ENCODE measurements at regions of chr7 and their contacts with region 1.

Region 1: GRCh38 chr7:151315038-151315655 is 26.5 kb upstream of the NUB1 start:
- DNase-seq: peak; percentile 90
- H3K4me3 ChIP-seq: no peak overlapping the region
- H3K27ac ChIP-seq: no peak overlapping the region
- H3K4me1 ChIP-seq: no peaks in the 10 kb centered on the region
- H3K27me3 ChIP-seq: no peaks in the 10 kb centered on the region
- CTCF ChIP-seq: peak; percentile 97
- EP300 ChIP-seq: no peak
- RAD21 ChIP-seq: peak; percentile 90

Region 2: DNA sequence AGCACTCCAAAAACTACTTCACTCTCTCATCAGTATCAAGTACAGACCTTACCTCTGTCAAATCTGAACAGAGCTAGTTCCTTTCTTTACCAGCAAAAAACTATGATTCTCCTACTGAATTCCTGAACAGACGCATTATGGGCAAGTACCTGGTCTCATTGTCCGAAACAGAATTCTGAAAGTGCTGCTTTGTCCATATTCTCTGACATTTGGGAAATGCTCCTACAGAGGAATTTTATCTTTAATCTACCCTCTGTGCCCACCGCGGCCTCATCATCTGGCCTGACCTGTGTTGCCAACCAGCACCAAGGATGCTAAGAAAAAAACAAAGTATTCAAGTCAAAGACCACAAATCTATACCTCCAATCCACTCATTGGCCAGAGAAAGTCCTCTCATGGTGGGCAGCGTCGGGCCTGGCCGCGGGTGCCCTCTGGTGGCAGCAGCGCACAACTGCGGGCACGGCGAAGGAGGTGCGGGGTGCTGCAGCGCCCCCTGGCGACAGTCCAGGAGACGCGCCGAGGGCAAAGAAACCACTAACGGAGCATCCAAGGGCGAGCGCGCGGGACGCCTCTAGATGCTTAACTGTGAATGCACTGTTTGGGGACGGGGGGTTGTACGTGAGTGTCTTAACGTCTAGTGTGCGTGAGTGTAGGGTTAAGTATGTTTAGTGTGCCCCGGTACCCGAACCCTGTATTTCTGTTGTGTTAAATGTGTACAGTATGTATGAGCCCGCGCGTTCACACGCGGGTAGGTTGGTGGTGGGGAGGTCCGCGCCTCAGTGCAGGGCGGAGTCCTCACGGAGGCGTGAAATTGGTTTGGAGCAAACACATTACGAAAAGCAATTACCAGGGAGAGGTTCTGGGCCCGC is 142.6 kb before region 1 on chr7:
- CTCF ChIA-PET with region 1: interaction called, 15 read pairs
- POLR2A ChIA-PET with region 1: no interaction called
- DNase-seq: peak; percentile 97
- H3K4me3 ChIP-seq: peak overlapping the region in 1 of 2 experiments; percentile 48; a peak in 1 of 4 replicates
- H3K27ac ChIP-seq: no peak overlapping the region
- H3K4me1 ChIP-seq: peaks cover 0 to 4% of the 10 kb centered on the region in 2 experiments; a peak in 1 of 4 replicates
- H3K27me3 ChIP-seq: peaks cover 60% of the 10 kb centered on the region
- CTCF ChIP-seq: peak; percentile 100
- EP300 ChIP-seq: no peak
- RAD21 ChIP-seq: peak; percentile 97

Region 3: GRCh38 chr7:151286148-151286547 is 29.0 kb before region 1 on chr7:
- CTCF ChIA-PET with region 1: interaction called, 11 read pairs
- POLR2A ChIA-PET with region 1: no interaction called
- DNase-seq: no peak
- H3K4me3 ChIP-seq: no peak overlapping the region
- H3K27ac ChIP-seq: no peak overlapping the region
- H3K4me1 ChIP-seq: no peaks in the 10 kb centered on the region
- H3K27me3 ChIP-seq: peaks cover 40% of the 10 kb centered on the region; the same call in 1 of the 2 replicates
- CTCF ChIP-seq: no peak
- EP300 ChIP-seq: no peak
- RAD21 ChIP-seq: no peak

Region 4: DNA sequence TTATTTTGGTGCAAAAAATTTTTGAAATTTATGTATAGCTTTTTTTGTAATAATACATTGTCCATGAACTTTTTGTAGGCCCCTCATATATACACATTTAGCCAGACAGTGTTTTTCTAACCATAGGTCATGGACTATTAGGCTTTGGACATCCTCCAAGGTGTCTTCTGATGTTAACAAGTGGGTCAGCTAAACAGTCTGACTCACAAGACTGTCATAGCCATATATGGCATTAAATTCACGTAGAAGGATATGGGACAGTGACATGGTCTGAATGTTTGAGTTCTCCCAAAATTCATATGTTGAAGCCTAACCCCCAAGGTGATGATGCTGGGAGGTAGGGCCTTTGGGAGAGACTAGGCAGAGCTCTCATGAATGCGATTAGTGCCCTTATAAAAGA is 12.5 kb after region 1 on chr7:
- CTCF ChIA-PET with region 1: interaction called, 152 read pairs
- POLR2A ChIA-PET with region 1: no interaction called
- DNase-seq: no peak
- H3K4me3 ChIP-seq: no peak overlapping the region
- H3K27ac ChIP-seq: no peak overlapping the region
- H3K4me1 ChIP-seq: no peaks in the 10 kb centered on the region; a peak in 1 of 4 replicates
- H3K27me3 ChIP-seq: no peaks in the 10 kb centered on the region; the same call in 1 of the 2 replicates
- CTCF ChIP-seq: no peak
- EP300 ChIP-seq: no peak
- RAD21 ChIP-seq: no peak

Region 5: GRCh38 chr7:151351027-151351426 is 35.9 kb after region 1 on chr7:
- CTCF ChIA-PET with region 1: interaction called, 237 read pairs
- POLR2A ChIA-PET with region 1: no interaction called
- DNase-seq: peak; percentile 48
- H3K4me3 ChIP-seq: no peak overlapping the region
- H3K27ac ChIP-seq: no peak overlapping the region; a peak in 1 of 4 replicates
- H3K4me1 ChIP-seq: peaks cover 5 to 8% of the 10 kb centered on the region in 2 experiments; a peak in 2 of 4 replicates
- H3K27me3 ChIP-seq: no peaks in the 10 kb centered on the region
- CTCF ChIP-seq: peak; percentile 51
- EP300 ChIP-seq: no peak
- RAD21 ChIP-seq: peak; percentile 23; the same call in 1 of the 2 replicates

Region 6: DNA sequence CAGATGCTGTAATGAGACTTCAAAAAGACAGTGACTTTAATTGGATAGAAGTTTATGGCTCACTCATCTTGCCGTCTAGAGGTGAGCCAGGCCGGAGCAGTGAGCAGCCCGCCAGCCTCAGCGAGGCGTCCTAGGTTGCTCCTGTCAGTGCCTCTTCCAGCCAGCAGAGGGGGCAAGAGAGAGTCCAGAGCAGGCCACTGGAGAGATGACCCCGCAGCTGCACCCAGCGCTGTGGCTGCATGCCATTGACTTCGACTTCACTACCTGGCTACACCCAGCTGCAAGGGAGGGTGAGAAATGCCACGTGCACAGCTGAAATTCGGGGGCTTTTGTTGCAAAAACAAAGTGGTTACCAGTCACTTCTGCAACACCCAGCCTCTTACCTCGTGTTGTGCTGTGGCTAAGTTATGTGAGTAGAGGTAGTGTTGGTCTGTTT is 53.0 kb after region 1 on chr7:
- CTCF ChIA-PET with region 1: interaction called, 40 read pairs
- POLR2A ChIA-PET with region 1: no interaction called
- DNase-seq: peak; percentile 91
- H3K4me3 ChIP-seq: no peak overlapping the region
- H3K27ac ChIP-seq: no peak overlapping the region
- H3K4me1 ChIP-seq: peaks cover 0 to 13% of the 10 kb centered on the region in 2 experiments; a peak in 2 of 4 replicates
- H3K27me3 ChIP-seq: no peaks in the 10 kb centered on the region
- CTCF ChIP-seq: peak; percentile 99
- EP300 ChIP-seq: no peak
- RAD21 ChIP-seq: peak; percentile 90